Heart left ventricle (tissue), 16 donors: ENCODE measurements at regions of chr3 and their contacts with region 1.

Region 1: DNA sequence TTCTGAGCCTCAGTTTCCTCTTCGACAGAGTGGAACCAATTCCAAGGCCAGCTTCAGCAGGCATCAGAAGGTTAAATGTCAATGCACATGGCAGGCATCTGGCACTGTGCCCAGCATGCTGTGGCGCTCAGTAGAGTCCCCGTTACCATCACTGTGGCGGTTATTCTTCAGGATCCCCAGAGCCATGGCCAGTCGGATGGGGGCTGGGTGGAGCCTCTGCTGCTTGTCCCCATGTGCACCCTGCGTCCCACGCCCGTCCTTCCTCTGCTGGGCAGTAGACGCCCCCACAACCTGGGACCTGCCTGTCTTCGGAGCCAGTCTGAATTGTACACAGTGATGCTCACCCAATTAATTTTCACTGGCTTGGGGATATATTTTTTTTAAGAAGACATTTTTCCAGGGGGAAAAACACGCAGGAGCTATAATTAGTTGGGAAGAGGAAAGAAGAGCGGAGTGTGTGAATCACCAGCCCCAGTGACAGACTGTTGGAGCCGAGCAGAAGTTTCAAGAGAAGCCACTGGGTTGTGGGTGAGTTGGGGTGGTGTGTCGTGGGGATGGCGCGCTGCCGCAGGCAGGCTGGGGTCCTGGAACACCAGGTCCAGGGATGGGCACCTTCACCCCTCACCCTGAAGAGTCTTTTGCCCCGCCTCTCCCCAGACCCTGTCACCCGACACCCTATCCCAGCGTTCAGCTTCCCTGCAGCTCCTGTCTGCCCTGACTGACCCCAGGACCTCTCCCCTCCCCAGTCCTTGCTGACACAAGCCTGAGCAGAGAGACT is 26.8 kb upstream of the RPL29 start:
- DNase-seq: peak; percentile 72 to 85 (median 80)
- ATAC-seq: peak; percentile 16 to 60 (median 48)
- H3K4me3 ChIP-seq: peak overlapping the region; percentile 15 to 55 (median 36)
- H3K27ac ChIP-seq: peak overlapping the region; percentile 81 to 99 (median 93)
- H3K4me1 ChIP-seq: peaks cover 39 to 91% (median 79%) of the 10 kb centered on the region in 12 donors
- H3K27me3 ChIP-seq: no peaks in the 10 kb centered on the region
- CTCF ChIP-seq: no peak
- POLR2A ChIP-seq: no peak

Region 2: GRCh38 chr3:52041118-52041731 is 18.7 kb after region 1 on chr3:
- intact Hi-C with region 1: loop called in 1 of 10 experiments (anchors 1 kb)
- DNase-seq: no peak
- ATAC-seq: peak; percentile 14 to 40 (median 24)
- H3K4me3 ChIP-seq: no peak overlapping the region
- H3K27ac ChIP-seq: peak overlapping the region in 10 of 12 donors; percentile 39 to 89 (median 83)
- H3K4me1 ChIP-seq: peaks cover 1 to 37% (median 24%) of the 10 kb centered on the region in 12 donors
- H3K27me3 ChIP-seq: no peaks in the 10 kb centered on the region
- CTCF ChIP-seq: peak in 6 of 12 donors; percentile 23 to 42 (median 30)
- POLR2A ChIP-seq: no peak

Region 3: DNA sequence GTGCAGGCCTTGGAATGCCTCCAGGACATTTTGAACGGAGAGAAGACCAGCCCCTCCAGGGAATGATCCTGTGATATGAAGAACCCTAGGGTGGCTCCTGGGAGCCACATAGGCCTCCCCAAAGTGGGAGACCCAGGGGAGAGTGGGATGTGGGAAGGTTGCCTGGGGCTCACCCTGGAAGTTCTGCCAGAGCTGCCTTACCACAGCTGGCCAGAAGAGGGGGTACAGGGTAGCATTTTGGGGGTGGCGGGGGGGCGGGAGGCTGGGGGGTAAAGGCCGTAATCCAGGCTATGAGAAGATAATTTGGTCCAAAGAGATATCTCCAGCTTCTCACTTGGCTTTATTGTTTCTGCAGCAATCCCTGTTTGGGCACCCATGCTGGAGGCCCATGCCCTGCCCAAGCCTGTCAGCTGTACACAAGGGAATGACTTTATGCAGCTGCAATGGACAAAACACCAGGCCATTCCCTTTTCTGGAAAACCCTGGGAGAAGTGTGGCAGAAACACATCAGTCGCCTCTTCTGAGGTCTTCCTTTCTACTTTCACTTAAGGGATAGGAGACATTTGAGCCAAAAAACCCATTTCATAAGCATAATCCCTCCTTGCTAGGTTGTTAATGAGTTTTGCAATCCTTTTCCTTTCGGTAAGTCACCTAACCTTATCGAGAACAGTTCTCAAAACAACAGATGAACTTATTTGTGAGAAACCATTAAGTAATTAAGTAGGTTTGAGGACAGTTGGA is 823.3 kb after region 1 on chr3:
- intact Hi-C with region 1: no loop called
- DNase-seq: peak in 2 of 5 donors; percentile 43 to 64
- ATAC-seq: peak in 2 of 4 donors; percentile 17 to 23
- H3K4me3 ChIP-seq: peak overlapping the region in 3 of 12 donors; percentile 7 to 21 (median 13)
- H3K27ac ChIP-seq: peak overlapping the region; percentile 42 to 90 (median 72)
- H3K4me1 ChIP-seq: peaks cover 6 to 57% (median 43%) of the 10 kb centered on the region in 12 donors
- H3K27me3 ChIP-seq: no peaks in the 10 kb centered on the region
- CTCF ChIP-seq: peak; percentile 17 to 54 (median 42)
- POLR2A ChIP-seq: no peak